RWPE1 (cell line): ENCODE measurements at regions of chr10 and their contacts with region 1.

Region 1: GRCh38 chr10:99172130-99172738 is 63.4 kb downstream of the HPSE2 start:
- DNase-seq: peak; percentile 67
- H3K27ac ChIP-seq: no peak overlapping the region
- CTCF ChIP-seq: peak; percentile 47

Region 2: GRCh38 chr10:97454330-97455036 is 1717.8 kb before region 1 on chr10:
- CTCF ChIA-PET with region 1: no interaction called
- POLR2A ChIA-PET with region 1: no interaction called
- DNase-seq: no peak
- H3K27ac ChIP-seq: peak overlapping the region; percentile 62
- CTCF ChIP-seq: no peak

Region 3: GRCh38 chr10:98467506-98468346 is 704.5 kb before region 1 on chr10:
- CTCF ChIA-PET with region 1: interaction called, 12 read pairs
- POLR2A ChIA-PET with region 1: no interaction called
- DNase-seq: peak; percentile 91
- H3K27ac ChIP-seq: no peak overlapping the region
- CTCF ChIP-seq: peak; percentile 79

Region 4: DNA sequence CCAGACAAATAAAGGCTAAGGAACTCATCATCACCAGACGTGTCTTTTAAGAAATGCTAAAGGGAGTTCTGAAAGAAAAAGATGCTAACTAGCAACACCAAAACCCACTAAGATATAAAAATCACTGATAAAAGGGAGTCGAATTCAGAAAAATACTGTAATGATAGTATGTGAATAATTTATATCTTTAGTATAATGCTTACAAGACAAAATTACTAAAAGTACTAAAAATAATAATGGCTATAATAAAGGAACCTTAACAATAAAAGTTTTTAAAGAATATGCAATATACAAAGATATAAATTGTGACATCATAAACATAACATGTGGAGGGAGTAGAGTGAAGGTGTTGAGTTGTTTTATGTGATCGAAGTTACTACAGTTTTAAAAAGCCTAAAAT is 35.1 kb after region 1 on chr10:
- CTCF ChIA-PET with region 1: no interaction called
- POLR2A ChIA-PET with region 1: no interaction called
- DNase-seq: no peak
- H3K27ac ChIP-seq: no peak overlapping the region
- CTCF ChIP-seq: no peak